Stomach (tissue), 19 donors: ENCODE measurements at regions of chr17 and their contacts with region 1.

Region 1: DNA sequence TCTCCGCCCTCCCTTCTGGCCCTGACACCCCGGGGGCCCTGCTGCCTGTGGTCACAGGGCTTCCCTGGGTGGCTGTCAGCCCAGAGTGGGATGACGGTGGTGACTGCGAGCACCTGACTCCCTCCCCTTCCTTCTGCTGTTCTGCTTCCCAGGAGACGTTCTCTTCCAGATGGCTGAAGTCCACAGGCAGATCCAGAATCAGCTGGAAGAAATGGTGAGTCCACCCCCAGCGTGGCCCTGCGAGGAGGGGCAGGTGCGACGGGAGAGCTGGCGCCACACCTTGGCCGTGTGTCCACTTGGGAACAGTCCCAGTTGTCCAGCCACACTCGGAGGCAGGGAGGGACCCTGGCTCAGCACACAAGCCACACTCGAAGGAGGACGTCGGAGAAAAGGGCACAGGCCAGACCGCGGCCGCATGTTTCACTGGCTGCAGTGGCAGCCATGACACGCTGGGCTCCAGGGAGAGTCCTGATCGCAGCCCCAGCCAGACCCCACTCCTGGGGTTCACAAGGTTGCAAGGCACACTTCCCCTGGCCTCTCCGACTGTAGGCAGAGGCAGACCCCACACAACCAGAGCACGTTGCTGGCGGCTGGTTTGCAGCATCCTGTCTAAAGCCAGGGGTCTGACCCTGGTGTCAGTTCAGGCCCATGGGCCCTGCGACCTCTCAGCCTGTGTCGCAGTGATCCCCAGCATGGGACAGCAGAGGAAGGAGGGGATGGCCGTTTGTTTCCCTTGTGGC is 49.9 kb downstream of the BAIAP2 start:
- DNase-seq: peak; percentile 50 to 93
- H3K4me3 ChIP-seq: no peak overlapping the region
- H3K27ac ChIP-seq: peak overlapping the region; percentile 88 to 95 (median 90)
- H3K4me1 ChIP-seq: peaks cover 54 to 81% (median 78%) of the 10 kb centered on the region in 4 donors
- H3K27me3 ChIP-seq: no peaks in the 10 kb centered on the region
- CTCF ChIP-seq: no peak
- EP300 ChIP-seq: no peak
- POLR2A ChIP-seq: no peak

Region 2: GRCh38 chr17:81040791-81041337 is 44.0 kb before region 1 on chr17:
- intact Hi-C with region 1: loop called (anchors 5 kb)
- DNase-seq: no peak
- H3K4me3 ChIP-seq: no peak overlapping the region
- H3K27ac ChIP-seq: peak overlapping the region in 3 of 5 donors; percentile 40 to 89 (median 82)
- H3K4me1 ChIP-seq: peaks cover 88 to 100% (median 93%) of the 10 kb centered on the region in 4 donors
- H3K27me3 ChIP-seq: no peaks in the 10 kb centered on the region
- CTCF ChIP-seq: peak in 3 of 7 experiments; percentile 19 to 35 (median 26)
- EP300 ChIP-seq: no peak
- POLR2A ChIP-seq: no peak